ENCODE measurements at regions of chr7 and their contacts with region 1.

Region 1: DNA sequence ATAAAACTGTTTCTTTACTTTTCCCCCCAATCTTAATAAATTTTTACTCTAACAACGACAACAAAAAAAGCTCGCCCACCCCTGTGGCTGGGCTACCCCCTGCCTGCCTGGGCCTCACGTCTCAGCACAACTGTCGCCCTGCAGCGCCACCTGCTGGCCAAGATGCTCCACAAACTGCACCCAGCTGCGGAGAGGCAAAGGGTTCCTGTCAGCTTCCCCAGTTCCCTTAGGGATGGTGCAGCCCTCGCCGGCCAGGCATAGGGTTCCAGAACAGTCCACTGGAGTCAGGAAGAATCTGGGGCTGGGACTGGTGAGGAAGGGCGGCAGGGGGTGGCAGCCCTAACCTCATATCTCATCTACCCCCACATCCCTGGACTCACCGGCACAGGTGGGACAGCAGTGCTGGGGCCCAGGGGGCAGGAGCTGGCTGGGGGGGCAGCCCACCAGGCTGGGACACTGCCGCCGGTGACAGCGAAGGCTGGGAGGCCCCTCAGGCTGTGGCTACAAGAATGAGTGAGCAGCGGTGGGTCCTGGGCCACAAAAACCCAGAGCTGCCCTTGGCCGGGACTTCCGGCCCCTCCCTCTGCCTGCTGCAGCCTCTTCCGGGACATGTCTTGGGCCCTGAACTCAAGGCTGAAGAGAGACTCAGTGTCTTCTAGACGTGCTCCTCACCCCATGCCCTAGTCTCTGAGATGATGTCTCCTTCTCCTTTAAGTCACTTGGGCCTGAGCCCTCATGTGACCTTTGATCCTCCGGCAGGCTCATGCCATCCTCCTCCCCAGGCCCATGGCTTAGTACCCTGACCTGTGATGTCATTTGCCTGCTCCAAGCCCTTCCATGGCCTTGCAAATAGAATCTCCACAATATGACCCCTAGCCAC is 21.2 kb downstream of the ATP6V1F start:
- DNase-seq: peak; percentile 47
- H3K4me3 ChIP-seq: no peak overlapping the region
- H3K27ac ChIP-seq: no peak overlapping the region
- H3K4me1 ChIP-seq: peaks cover 8% of the 10 kb centered on the region
- H3K27me3 ChIP-seq: no peaks in the 10 kb centered on the region
- CTCF ChIP-seq: peak; percentile 85 to 90

Region 2: GRCh38 chr7:128347647-128348097 is 536.2 kb before region 1 on chr7:
- CTCF ChIA-PET with region 1: no interaction called
- dilution Hi-C with region 1: no loop called
- in situ Hi-C with region 1: no loop called
- intact Hi-C with region 1: loop called (anchors 5 kb)
- DNase-seq: no peak
- H3K4me3 ChIP-seq: no peak overlapping the region
- H3K27ac ChIP-seq: no peak overlapping the region
- H3K4me1 ChIP-seq: peaks cover 8% of the 10 kb centered on the region
- H3K27me3 ChIP-seq: peaks cover 15% of the 10 kb centered on the region
- CTCF ChIP-seq: peak; percentile 70 to 92

Region 3: DNA sequence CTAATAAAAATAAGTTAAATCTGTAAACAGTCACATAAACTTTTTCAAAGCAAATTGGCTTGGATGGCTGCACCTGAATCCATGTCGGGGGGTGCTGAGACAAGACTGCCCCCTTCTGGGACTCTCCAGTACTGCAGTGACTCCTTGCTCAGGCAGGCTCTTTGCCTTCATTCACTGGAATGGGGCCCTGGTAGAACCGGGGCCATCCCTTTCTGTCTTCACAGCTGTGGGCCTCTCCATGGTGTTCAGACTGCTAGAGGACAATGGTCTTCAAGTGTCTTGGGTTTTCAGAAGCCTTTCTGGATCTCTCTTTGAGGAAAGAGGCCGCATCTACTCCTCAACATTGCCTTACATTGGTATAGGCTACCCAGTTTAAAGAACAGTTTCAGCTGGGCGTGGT is 458.0 kb before region 1 on chr7:
- CTCF ChIA-PET with region 1: interaction called, 3 read pairs
- dilution Hi-C with region 1: no loop called
- in situ Hi-C with region 1: no loop called
- intact Hi-C with region 1: loop called (anchors 2 kb)
- DNase-seq: peak; percentile 32
- H3K4me3 ChIP-seq: no peak overlapping the region
- H3K27ac ChIP-seq: no peak overlapping the region
- H3K4me1 ChIP-seq: peaks cover 3% of the 10 kb centered on the region
- H3K27me3 ChIP-seq: no peaks in the 10 kb centered on the region
- CTCF ChIP-seq: peak; percentile 92 to 98

Region 4: DNA sequence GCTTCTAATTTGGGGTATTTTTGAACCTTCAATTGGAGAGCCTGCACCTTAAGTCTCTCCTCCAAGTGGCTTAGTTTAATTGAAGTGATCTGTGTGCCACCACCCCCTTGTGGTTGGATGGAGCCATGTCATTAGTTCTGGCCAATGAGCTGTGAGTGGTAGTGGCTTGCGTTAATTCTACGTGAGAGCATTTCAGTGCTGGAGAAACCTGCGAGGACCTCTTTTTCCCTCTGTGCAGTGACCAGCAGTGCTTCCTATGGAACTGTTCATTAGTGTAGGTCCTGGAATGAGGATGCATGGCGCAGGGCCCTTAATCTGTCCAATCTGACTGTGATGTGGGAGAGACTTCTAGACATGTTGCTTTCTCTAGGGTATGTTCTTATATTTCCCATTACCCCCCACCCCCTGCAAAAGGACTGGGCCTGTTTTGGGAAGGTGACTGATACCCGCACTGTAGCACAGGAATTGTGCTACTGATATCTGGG is 424.4 kb before region 1 on chr7:
- CTCF ChIA-PET with region 1: interaction called, 16 read pairs
- dilution Hi-C with region 1: no loop called
- in situ Hi-C with region 1: no loop called
- intact Hi-C with region 1: no loop called
- DNase-seq: peak; percentile 52
- H3K4me3 ChIP-seq: no peak overlapping the region
- H3K27ac ChIP-seq: no peak overlapping the region
- H3K4me1 ChIP-seq: peaks cover 20% of the 10 kb centered on the region
- H3K27me3 ChIP-seq: no peaks in the 10 kb centered on the region
- CTCF ChIP-seq: peak; percentile 61 to 76

Region 5: DNA sequence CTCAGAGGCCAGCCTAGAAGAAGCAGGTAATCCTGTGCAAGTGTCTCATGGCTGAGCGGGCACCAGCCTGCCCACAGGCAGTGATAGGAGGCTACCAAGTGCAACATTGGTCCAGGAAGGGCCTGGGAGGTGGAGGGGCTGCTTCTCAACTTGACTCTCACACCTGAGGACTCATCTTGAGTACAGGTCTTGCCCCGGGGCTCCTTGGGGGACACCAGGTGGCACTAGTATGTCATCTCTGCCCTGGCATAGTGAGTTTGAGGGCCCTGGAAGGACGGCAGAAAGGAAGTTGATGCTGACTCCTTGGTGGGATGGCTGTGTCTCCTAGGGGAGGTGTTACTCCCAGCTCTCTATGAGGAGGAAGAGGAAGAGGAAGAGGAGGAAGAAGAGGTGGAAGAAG is 89.8 kb before region 1 on chr7:
- CTCF ChIA-PET with region 1: no interaction called
- dilution Hi-C with region 1: no loop called
- in situ Hi-C with region 1: no loop called
- intact Hi-C with region 1: loop called (anchors 1 kb)
- DNase-seq: no peak
- H3K4me3 ChIP-seq: no peak overlapping the region
- H3K27ac ChIP-seq: no peak overlapping the region
- H3K4me1 ChIP-seq: peaks cover 10% of the 10 kb centered on the region
- H3K27me3 ChIP-seq: no peaks in the 10 kb centered on the region
- CTCF ChIP-seq: no peak

Region 6: GRCh38 chr7:128862571-128863432 is 21.1 kb before region 1 on chr7 and contains the start of gene ATP6V1F:
- CTCF ChIA-PET with region 1: no interaction called
- dilution Hi-C with region 1: no loop called
- in situ Hi-C with region 1: no loop called
- intact Hi-C with region 1: loop called (anchors 2 kb)
- DNase-seq: peak; percentile 97
- H3K4me3 ChIP-seq: peak within 1 kb of the TSS; percentile 58 to 99 (median 89)
- H3K27ac ChIP-seq: peak within 1 kb of the TSS; percentile 75
- H3K4me1 ChIP-seq: peaks cover 12% of the 10 kb centered on the region
- H3K27me3 ChIP-seq: no peaks in the 10 kb centered on the region
- CTCF ChIP-seq: no peak
- total RNA-seq, gene ATP6V1F: 83.7 to 171 TPM

Region 7: GRCh38 chr7:129091484-129092002 is 207.7 kb after region 1 on chr7:
- CTCF ChIA-PET with region 1: no interaction called
- dilution Hi-C with region 1: no loop called
- in situ Hi-C with region 1: no loop called
- intact Hi-C with region 1: loop called (anchors 1 kb)
- DNase-seq: peak; percentile 52
- H3K4me3 ChIP-seq: no peak overlapping the region
- H3K27ac ChIP-seq: no peak overlapping the region
- H3K4me1 ChIP-seq: no peaks in the 10 kb centered on the region
- H3K27me3 ChIP-seq: no peaks in the 10 kb centered on the region
- CTCF ChIP-seq: peak; percentile 98 to 100